Breast epithelium (tissue), 4 donors: ENCODE measurements at regions of chr9 and their contacts with region 1.

Region 1: DNA sequence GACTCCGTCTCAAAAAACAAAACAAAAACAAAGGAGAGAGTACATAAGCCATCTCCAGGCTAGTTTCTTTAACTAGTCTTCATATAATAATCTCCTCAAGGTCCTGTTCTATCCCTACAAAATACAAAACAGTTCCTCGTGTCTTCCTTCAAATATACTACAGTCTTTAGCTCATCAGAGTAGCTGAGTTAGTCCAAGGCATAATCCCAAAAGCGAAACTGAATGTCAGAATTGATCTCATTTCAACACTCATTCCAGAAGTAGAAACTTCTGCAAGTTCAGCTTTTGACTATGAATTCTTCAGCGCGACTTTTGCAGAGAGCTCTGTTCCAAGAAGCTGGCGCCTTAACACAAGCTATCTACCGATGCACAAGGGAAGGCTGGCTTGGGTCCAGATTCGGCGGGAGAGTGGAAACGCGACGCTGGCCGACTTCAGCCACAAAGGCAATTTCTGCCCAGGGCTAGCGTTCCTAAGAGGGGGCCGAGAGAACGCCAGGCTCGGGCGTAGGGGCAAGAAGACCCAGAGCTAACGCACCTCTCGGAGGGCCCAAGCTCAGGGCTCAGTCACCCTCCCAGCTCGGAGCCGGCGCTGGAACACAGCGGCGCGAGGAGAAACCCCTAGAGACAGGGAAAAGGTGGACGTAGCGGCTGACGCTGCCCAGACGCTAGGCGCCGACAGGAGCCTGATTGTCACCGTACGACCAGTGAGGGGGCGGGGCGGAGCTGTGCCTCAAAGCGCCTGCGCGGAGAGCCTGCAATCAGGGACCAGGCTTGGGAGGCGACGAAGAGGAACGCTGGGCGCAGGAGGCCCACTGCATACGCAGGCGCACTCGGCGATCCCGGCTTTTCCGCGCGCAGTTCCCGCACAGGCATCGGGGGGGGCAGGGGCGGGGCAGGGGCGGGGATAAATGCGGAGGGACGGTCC is 469 bp upstream of the HSDL2 start:
- DNase-seq: peak; percentile 98 to 99
- H3K4me3 ChIP-seq: peak overlapping the region; percentile 63 to 94 (median 78)
- H3K27ac ChIP-seq: peak overlapping the region; percentile 95 to 97
- H3K4me1 ChIP-seq: peaks cover 0 to 5% of the 10 kb centered on the region in 2 donors
- H3K27me3 ChIP-seq: no peaks in the 10 kb centered on the region
- CTCF ChIP-seq: no peak
- POLR2A ChIP-seq: peak; percentile 64

Region 2: DNA sequence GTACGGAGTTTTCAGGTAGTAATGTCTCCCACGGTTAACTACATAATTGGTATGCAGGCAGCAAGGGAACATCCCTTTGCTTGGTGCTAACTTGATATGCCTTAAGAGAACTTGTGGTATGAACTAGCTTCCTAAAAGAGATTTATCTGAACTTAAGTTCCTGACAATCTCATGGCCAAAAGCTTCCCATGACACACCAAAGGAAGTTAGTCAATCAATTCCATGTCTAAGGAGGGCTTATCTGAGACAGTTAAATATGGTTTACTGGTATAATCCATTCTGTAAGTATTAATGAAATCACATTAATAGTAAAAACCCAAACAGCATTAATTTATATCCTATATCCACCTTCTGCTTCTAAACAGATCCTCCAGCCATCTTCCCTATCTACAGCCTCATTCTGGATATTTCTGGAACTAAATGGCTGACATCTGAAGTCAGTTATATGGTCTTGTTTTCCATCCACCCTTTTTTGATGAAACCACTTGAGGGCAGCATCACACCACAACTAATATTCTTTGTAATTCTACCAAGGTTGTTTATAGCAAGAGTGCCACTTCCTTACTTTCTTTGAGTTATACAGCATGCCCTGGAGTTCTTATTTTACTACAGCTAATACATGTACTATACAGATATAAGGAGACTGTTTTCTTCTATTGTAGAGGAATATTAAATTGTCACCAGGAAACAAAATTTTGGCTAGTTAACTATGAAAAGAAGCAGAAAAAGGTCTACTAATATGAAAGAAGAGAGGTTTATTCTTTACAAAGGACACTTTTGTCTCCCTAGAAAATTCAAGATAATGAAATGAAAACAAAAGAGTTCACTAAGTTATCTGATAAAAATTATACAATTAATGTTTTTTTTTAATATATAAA is 619.4 kb before region 1 on chr9:
- intact Hi-C with region 1: loop called (anchors 5 kb)
- DNase-seq: no peak
- H3K4me3 ChIP-seq: no peak overlapping the region
- H3K27ac ChIP-seq: no peak overlapping the region
- H3K4me1 ChIP-seq: no peaks in the 10 kb centered on the region
- H3K27me3 ChIP-seq: no peaks in the 10 kb centered on the region
- CTCF ChIP-seq: peak in 2 of 3 donors; percentile 66 to 77
- POLR2A ChIP-seq: no peak